Caco-2 (cell line): ENCODE measurements at regions of chr2 and their contacts with region 1.

Region 1: DNA sequence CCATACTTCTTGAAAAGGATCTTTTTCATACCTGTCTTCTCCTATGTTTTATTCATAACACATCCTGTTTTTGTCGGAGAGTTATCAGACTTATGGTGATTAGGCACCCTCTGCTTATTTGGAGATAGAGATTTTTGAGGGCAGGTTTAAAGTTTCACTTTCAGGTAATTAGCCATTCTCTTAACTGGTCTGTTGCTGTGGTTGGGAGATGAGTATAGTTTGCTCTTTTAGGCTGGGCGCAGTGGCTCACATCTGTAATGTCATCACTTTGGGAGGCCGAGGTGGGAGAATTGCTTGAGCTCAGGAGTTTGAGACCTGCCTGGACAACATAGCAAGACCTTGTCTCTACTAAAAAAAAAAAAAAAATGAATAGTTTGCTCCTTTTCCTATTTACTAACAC is 25.3 kb downstream of the SFTPB start:
- DNase-seq: no peak
- H3K4me3 ChIP-seq: no peak overlapping the region
- H3K4me3 Mint-ChIP-seq: no peak overlapping the region
- H3K27ac Mint-ChIP-seq: no peak overlapping the region
- H3K4me1 ChIP-seq: no peaks in the 10 kb centered on the region
- H3K4me1 Mint-ChIP-seq: no peaks in the 10 kb centered on the region
- H3K27me3 ChIP-seq: no peaks in the 10 kb centered on the region
- H3K27me3 Mint-ChIP-seq: no peaks in the 10 kb centered on the region
- CTCF ChIP-seq: no peak

Region 2: GRCh38 chr2:85628658-85629057 is 14.1 kb before region 1 on chr2:
- CTCF ChIA-PET with region 1: interaction called, 13 read pairs
- POLR2A ChIA-PET with region 1: no interaction called
- intact Hi-C with region 1: no loop called
- DNase-seq: no peak
- H3K4me3 ChIP-seq: no peak overlapping the region
- H3K4me3 Mint-ChIP-seq: no peak overlapping the region
- H3K27ac Mint-ChIP-seq: no peak overlapping the region
- H3K4me1 ChIP-seq: no peaks in the 10 kb centered on the region
- H3K4me1 Mint-ChIP-seq: no peaks in the 10 kb centered on the region
- H3K27me3 ChIP-seq: no peaks in the 10 kb centered on the region
- H3K27me3 Mint-ChIP-seq: no peaks in the 10 kb centered on the region
- CTCF ChIP-seq: no peak

Region 3: DNA sequence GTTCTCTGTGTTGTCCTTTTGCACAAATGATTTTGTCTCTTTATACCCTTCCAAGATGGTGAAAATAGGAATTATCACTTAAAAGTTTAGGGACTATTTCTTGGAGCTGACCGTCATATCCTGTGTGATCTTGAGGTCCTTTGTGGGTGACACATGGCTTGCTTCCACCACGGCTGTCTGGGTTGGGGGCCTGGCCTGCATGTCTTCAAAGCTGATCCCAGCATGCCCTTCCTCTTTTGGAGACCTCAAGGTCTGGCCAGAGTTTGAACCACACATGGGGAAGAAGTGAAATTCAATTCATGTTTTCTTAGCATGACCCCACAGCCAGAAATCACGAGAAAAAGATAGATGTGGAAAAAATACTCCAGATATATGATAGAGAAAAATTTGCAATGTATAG is 11.3 kb after region 1 on chr2:
- CTCF ChIA-PET with region 1: interaction called, 13 read pairs
- POLR2A ChIA-PET with region 1: no interaction called
- intact Hi-C with region 1: no loop called
- DNase-seq: no peak
- H3K4me3 ChIP-seq: no peak overlapping the region
- H3K4me3 Mint-ChIP-seq: no peak overlapping the region
- H3K27ac Mint-ChIP-seq: no peak overlapping the region
- H3K4me1 ChIP-seq: 0 out of 2 replicates have a peak, but pooled peaks cover 5% of the 10 kb centered on the region
- H3K4me1 Mint-ChIP-seq: peaks cover 11% of the 10 kb centered on the region
- H3K27me3 ChIP-seq: no peaks in the 10 kb centered on the region
- H3K27me3 Mint-ChIP-seq: no peaks in the 10 kb centered on the region
- CTCF ChIP-seq: no peak

Region 4: DNA sequence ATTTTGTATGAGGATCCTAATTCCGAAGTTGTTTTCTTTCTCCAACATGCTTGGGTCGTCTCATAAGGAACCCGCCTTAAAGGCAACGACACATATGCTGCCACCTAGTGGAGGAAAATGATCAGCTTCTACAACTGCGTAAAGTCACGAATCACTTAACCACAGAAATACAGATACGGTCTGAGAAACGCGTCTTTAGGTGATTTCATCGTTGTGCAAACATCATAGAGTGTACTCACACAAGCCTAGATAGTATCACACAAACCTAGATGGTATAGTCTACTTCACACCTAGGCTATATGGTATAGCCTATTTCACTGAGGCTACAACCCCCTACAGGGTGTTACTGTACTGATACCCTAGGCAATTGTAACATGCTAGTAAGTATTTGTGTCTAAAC is 64.6 kb after region 1 on chr2:
- CTCF ChIA-PET with region 1: interaction called, 10 read pairs
- POLR2A ChIA-PET with region 1: no interaction called
- intact Hi-C with region 1: loop called (anchors 5 kb)
- DNase-seq: peak; percentile 74 to 84
- H3K4me3 ChIP-seq: no peak overlapping the region
- H3K4me3 Mint-ChIP-seq: peak overlapping the region; percentile 23
- H3K27ac Mint-ChIP-seq: no peak overlapping the region
- H3K4me1 ChIP-seq: no peaks in the 10 kb centered on the region
- H3K4me1 Mint-ChIP-seq: no peaks in the 10 kb centered on the region
- H3K27me3 ChIP-seq: no peaks in the 10 kb centered on the region
- H3K27me3 Mint-ChIP-seq: peaks cover 14% of the 10 kb centered on the region
- CTCF ChIP-seq: peak; percentile 73 to 85